OCI-LY7 (cell line): ENCODE measurements at regions of chrX and their contacts with region 1.

Region 1: DNA sequence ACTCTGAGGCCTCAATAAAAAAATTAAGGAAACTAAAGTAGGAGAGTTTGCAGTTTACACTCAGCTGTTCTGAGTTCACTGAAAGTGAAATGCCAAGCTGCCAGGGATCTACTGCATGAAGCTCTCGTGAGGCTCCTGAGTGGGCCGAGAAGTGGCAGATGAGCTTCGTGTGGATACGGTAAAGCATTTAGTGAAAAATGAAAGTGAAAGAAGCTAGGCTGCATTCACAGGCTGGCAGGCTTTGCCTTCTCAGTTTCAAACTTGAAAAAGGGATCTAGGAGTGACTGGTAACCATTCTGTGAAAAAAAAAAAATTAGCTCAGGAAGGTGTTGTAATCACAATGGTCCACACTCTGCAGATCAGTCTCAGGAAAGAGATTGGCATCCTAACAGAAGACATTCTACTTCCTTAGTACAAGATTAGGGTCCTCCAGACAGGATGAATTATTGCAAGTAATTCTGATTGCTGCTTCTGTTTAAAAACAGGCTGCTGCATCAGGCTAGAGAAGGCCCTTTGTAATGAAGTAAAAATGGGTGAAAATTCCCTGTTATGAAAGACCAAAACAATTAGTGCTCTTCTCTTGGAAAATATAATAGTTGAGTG is 679.9 kb downstream of the RPA4 start:
- DNase-seq: peak; percentile 52
- H3K4me3 ChIP-seq: peak overlapping the region; percentile 21
- H3K27ac ChIP-seq: no peak overlapping the region
- H3K4me1 ChIP-seq: peaks cover 12% of the 10 kb centered on the region
- CTCF ChIP-seq: no peak

Region 2: DNA sequence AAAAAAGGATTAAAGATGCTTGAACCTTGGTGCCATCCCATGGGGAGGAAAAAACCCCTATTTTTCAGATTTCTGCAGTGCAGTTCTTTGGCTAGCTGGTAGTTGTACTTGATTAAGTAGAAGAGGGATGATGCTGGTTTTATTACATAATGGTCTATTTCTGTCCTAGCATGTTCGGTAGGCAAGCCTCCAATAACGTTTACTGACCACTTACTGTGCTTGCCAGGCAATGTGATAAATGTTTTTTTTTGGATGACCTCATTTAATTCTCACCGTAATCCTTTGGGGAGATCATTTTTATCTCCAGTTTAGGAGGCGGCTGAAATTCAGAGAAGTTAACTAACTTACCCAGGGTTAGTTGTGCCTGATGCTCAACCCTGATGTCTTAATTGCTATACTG is 772.1 kb before region 1 on chrX:
- CTCF ChIA-PET with region 1: no interaction called
- POLR2A ChIA-PET with region 1: interaction called, 10 read pairs
- intact Hi-C with region 1: no loop called
- DNase-seq: no peak
- H3K4me3 ChIP-seq: no peak overlapping the region
- H3K27ac ChIP-seq: no peak overlapping the region
- H3K4me1 ChIP-seq: no peaks in the 10 kb centered on the region
- CTCF ChIP-seq: no peak

Region 3: DNA sequence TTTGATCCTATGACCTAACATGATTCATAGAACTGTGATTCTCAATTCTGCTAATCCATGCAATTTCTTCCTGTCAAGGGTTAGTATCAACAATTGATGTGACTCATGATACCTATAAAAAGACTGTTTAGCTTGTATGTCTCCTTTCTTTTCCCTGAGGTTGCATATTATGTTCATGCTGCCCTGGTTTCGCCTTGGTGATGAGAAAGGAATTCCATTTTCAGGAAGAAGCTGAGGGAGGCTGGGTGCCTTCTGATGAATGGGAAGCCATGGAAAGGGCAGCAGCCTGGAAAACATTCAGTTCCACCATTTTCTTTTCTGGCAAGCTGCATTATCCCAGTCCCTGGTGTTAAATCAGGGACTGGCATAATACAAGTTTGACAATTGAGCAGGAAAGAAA is 296.6 kb after region 1 on chrX:
- CTCF ChIA-PET with region 1: no interaction called
- POLR2A ChIA-PET with region 1: no interaction called
- intact Hi-C with region 1: no loop called
- DNase-seq: no peak
- H3K4me3 ChIP-seq: no peak overlapping the region
- H3K27ac ChIP-seq: no peak overlapping the region
- H3K4me1 ChIP-seq: no peaks in the 10 kb centered on the region
- CTCF ChIP-seq: no peak